ENCODE measurements at regions of chr1 and their contacts with region 1.

Region 1: GRCh38 chr1:204806943-204807687 is 63.5 kb upstream of the NFASC start:
- DNase-seq: peak; percentile 85
- H3K4me3 Mint-ChIP-seq: peak overlapping the region; percentile 82
- H3K27ac Mint-ChIP-seq: peak overlapping the region; percentile 53
- H3K4me1 Mint-ChIP-seq: peaks cover 16% of the 10 kb centered on the region
- H3K27me3 Mint-ChIP-seq: peaks cover 9% of the 10 kb centered on the region

Region 2: DNA sequence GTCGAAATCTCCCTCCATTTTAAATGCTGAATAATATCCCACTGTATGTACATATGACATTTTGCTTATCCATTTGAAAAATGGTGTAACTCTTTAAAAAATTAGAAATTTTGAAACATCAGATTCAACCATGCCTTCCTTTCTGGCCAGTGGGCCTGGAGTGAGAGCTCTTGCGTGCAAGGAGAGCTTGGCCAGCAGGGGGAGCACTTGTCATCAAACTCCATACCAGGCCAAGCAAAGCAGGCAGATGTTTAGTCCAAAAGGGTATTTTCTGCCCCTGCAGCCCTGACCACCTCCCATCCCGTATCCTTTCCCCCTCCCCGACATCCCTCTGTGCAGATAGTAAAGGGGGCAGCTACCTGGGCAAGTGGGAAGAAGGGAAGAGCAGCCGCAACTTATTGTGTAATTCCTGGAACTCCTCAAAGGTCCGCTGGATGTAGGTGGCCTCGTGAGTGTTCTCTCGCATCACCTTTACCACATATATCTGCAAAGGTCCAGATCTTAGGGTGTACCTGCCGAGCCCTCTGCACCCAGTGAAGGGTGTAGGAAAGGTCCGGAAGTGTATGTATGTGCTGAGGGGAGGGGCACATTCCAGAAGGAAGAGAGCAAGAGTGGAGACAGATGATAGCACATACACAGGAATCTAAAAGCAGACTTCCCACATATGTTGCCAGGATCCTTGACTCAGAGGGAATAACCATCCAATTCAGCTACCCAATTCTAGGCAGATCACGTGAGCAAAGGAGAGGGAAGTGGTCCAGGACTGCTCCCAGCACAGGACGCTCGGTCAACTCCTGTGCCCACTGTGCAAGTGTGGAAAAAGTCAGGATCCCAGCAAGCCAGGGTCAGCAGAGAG is 375.6 kb before region 1 on chr1:
- CTCF ChIA-PET with region 1: interaction called, 24 read pairs
- POLR2A ChIA-PET with region 1: no interaction called
- DNase-seq: peak; percentile 81
- H3K4me3 Mint-ChIP-seq: no peak overlapping the region
- H3K27ac Mint-ChIP-seq: no peak overlapping the region
- H3K4me1 Mint-ChIP-seq: no peaks in the 10 kb centered on the region
- H3K27me3 Mint-ChIP-seq: no peaks in the 10 kb centered on the region

Region 3: DNA sequence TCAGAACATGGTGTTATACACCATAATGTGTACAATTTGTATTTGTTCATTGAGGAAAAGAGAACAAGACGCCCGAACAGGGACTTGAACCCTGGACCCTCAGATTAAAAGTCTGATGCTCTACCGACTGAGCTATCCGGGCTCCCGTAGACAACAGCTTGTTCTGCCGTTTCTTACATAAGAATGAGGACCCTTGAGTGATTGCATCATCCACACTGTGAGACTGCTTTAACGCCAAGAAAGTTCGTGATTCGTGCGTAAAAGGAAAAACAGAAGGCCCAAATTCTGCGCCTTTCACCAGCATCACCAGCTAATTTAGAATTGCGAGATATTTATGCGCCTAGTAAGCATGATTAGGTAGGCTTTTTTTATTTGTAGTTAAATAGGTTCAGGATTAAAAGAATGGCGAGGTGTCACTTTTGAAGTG is 300.1 kb before region 1 on chr1:
- CTCF ChIA-PET with region 1: interaction called, 27 read pairs
- POLR2A ChIA-PET with region 1: no interaction called
- DNase-seq: peak; percentile 90
- H3K4me3 Mint-ChIP-seq: peak overlapping the region; percentile 84
- H3K27ac Mint-ChIP-seq: peak overlapping the region; percentile 98
- H3K4me1 Mint-ChIP-seq: peaks cover 39% of the 10 kb centered on the region
- H3K27me3 Mint-ChIP-seq: no peaks in the 10 kb centered on the region

Region 4: GRCh38 chr1:204544321-204544720 is 262.8 kb before region 1 on chr1:
- CTCF ChIA-PET with region 1: interaction called, 10 read pairs
- POLR2A ChIA-PET with region 1: no interaction called
- DNase-seq: no peak
- H3K4me3 Mint-ChIP-seq: peak overlapping the region; percentile 33
- H3K27ac Mint-ChIP-seq: peak overlapping the region; percentile 86
- H3K4me1 Mint-ChIP-seq: peaks cover 54% of the 10 kb centered on the region
- H3K27me3 Mint-ChIP-seq: no peaks in the 10 kb centered on the region

Region 5: DNA sequence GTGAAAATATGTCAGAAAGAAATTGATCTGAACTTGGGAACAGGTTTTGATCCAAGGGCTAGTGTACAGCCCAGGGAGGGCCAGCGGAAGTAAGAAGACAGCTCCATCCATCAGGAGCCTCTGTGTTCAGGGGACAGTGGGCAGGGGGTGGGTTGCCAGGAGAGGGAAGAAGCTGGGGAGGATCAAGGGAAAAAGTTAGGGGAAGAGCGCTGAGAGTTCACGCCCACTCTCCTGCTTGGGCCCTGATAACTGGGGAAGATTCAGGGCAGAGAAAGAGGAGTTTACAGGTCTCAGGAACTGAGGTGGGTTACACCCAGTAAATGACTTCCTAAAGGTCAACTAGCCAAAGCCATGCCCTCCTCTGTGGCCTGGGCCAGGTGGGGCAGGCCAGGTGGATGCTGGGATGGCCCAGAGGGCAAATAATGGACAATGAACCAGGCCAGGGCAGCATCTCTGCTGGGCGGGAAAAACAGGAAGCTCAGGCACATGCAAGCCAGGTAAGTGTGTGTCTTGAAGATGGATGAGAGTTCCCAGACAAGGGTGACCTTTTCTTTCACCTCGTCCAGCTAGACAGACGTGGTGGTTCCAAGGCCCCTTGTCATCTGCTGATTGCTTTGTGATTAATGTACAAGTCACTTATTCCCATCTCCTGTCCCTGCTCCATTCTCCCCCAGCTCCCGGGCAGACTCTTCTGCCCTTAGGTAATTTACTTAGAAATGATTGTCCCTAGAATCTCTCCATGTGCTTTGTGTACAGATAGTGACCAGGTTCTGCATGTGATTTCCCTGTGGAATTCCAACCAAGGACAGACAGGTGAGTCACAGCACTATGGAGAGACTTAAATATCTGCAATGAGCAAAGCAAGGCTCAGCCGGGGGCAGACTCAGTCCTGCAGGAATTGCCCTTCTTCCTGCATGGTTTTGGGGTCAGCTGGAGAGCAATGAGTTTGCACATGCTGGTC is 233.9 kb before region 1 on chr1:
- CTCF ChIA-PET with region 1: interaction called, 144 read pairs
- POLR2A ChIA-PET with region 1: interaction called, 4 read pairs
- DNase-seq: no peak
- H3K4me3 Mint-ChIP-seq: no peak overlapping the region
- H3K27ac Mint-ChIP-seq: no peak overlapping the region
- H3K4me1 Mint-ChIP-seq: no peaks in the 10 kb centered on the region
- H3K27me3 Mint-ChIP-seq: no peaks in the 10 kb centered on the region

Region 6: DNA sequence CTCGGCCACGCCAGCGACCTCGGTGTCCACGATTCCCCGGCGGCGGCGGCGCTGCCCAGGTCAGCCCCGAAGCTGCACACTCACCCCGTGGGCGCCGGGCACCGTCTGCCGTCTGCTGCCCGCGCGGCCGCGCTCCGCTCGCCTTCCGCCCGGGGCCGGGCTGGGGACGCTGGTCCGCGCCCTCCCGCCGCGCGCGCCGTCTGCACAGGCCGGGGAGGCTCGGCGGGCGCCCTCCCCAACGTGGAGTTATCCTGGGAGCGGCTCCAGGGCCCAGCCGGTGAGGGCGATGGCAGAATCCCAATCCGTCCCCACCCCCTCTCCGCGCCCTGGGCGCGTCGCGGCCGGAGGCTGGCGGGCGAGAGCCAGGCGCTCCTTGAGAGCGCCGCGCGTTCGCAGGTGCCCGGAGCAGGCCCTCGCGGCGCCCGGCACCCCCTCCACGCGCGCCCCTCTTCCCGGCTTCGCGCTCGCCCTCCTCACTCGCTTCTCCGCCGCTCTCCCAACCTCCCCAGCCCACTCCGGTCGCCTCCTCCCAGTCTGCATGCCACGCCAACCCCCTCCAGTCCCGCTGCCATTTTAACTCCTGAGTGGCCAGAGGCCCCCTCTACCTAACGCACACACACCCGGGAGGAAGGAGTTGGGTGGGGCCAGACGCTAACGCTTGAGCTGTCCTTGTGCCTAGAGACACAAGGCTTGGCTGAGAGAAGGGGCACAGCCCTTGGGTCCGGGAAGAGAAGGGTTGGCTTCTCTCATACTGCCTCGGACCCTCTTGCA is 121.7 kb before region 1 on chr1 and contains the start of gene LRRN2:
- CTCF ChIA-PET with region 1: interaction called, 10 read pairs
- POLR2A ChIA-PET with region 1: no interaction called
- DNase-seq: no peak
- H3K4me3 Mint-ChIP-seq: peak within 1 kb of the TSS; percentile 47
- H3K27ac Mint-ChIP-seq: no peak within 1 kb of the TSS
- H3K4me1 Mint-ChIP-seq: peaks cover 11% of the 10 kb centered on the region
- H3K27me3 Mint-ChIP-seq: peaks cover 54% of the 10 kb centered on the region
- total RNA-seq, gene LRRN2: 0.10 to 0.25 TPM

Region 7: GRCh38 chr1:204791453-204792353 is 15.4 kb before region 1 on chr1:
- CTCF ChIA-PET with region 1: interaction called, 100 read pairs
- POLR2A ChIA-PET with region 1: interaction called, 3 read pairs
- DNase-seq: peak; percentile 80
- H3K4me3 Mint-ChIP-seq: no peak overlapping the region
- H3K27ac Mint-ChIP-seq: no peak overlapping the region
- H3K4me1 Mint-ChIP-seq: no peaks in the 10 kb centered on the region
- H3K27me3 Mint-ChIP-seq: peaks cover 32% of the 10 kb centered on the region

Region 8: GRCh38 chr1:205042911-205043806 is 236.0 kb after region 1 on chr1 and contains the start of gene CNTN2:
- CTCF ChIA-PET with region 1: no interaction called
- POLR2A ChIA-PET with region 1: no interaction called
- DNase-seq: no peak
- H3K4me3 Mint-ChIP-seq: no peak within 1 kb of the TSS
- H3K27ac Mint-ChIP-seq: no peak within 1 kb of the TSS
- H3K4me1 Mint-ChIP-seq: no peaks in the 10 kb centered on the region
- H3K27me3 Mint-ChIP-seq: peaks cover 51% of the 10 kb centered on the region
- total RNA-seq, gene CNTN2: not detected